Activated B cell treated with CpG ODN at 0.5 μM for 24 hours (primary cell): ENCODE measurements at regions of chr14 and their contacts with region 1.

Region 1: DNA sequence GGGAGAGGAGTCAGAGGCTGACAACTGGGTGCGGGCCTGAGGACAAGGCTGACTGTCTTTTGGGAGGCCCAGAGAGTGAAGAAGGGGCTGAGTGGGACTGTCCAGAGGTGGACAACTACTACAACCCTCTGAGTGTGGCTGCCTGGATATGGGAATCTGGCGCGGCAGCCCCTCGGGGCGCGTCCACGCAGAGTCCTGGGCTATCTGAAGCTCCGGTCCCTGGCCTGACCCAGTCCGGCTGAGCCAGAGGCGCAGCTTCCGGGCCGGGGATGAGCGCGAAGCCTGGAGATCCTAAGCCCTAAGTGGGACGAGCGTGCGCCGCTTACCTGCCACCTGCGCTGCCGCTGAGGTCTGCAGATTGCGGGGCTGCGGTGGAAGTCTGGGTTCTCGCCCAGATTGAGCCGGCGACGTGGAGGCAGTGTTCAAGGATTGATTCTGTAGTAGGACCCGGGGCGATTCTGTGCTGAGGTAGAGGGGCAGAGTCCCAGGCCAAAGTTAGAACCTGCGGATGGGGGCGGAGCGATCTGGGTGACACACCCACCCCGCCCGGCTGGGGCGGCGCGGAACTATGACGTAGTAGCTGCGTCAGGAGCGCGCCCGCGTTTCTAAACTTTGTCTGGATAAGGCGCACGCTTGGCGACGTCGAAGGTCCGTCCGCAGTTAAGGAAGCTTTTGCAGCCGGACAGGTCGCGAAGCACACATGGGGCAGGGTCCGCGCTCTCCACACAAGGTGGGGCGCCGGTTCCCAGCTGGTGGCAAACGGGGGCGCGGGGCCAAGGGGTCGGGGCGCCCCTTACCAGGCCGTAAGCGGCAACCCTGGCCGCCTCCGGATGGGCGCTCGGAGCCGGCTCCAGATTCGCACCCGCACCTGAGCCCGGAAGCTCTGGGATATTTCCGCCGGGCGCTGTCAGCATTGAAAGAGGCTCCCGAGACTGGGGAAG is at the starts of genes DHRS1 and NOP9:
- DNase-seq: peak; percentile 93
- ATAC-seq: peak; percentile 78
- H3K4me3 Mint-ChIP-seq: peak within 1 kb of the TSS; percentile 95
- H3K27ac Mint-ChIP-seq: peak within 1 kb of the TSS; percentile 94
- H3K4me1 Mint-ChIP-seq: peaks cover 51% of the 10 kb centered on the region
- H3K27me3 Mint-ChIP-seq: no peaks in the 10 kb centered on the region
- CTCF ChIP-seq: no peak
- total RNA-seq, gene DHRS1: 32.5 and 33.9 TPM in 2 replicates
- total RNA-seq, gene NOP9: 30.5 and 36.4 TPM in 2 replicates

Region 2: GRCh38 chr14:24013654-24014514 is 285.6 kb before region 1 on chr14:
- CTCF ChIA-PET with region 1: no interaction called
- POLR2A ChIA-PET with region 1: no interaction called
- intact Hi-C with region 1: loop called (anchors 1 kb)
- DNase-seq: no peak
- ATAC-seq: peak; percentile 97
- H3K4me3 Mint-ChIP-seq: no peak overlapping the region
- H3K27ac Mint-ChIP-seq: no peak overlapping the region
- H3K4me1 Mint-ChIP-seq: peaks cover 20% of the 10 kb centered on the region
- H3K27me3 Mint-ChIP-seq: no peaks in the 10 kb centered on the region
- CTCF ChIP-seq: peak; percentile 48

Region 3: DNA sequence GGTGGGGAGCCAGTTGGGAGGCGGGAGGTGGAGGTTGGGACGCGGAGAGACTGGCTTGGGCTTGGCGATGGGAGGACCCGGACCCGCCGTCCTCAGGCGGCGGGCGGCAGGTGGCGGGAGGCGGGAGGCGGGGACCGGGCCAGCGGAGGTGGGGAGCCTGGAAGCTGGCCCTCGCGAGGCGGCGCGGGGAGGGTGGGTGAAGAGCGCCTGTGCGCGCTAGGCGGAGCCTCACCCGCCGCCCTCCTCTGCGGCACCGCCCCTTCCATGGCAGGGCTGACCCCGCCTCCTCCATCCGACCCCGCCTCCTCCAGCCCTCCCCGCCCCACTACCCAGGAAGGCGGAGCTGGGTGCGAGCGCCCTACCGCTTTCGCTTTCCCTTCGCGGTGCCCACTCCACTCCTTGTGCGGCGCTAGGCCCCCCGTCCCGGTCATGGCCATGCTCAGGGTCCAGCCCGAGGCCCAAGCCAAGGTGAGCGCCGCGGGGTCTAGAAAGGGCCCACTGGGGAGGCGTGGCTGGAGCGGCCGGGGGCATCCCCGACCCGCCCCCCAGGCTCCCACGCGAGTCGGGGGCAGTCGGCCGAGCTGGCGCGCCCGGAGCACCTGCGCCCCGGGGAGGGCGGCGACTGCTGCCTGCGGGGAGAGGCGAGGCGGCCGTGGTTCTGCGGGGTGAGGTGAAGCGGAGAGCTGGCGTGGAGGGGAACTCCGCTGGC is 163.5 kb before region 1 on chr14 and contains the start of gene PSME1:
- CTCF ChIA-PET with region 1: no interaction called
- POLR2A ChIA-PET with region 1: no interaction called
- intact Hi-C with region 1: loop called (anchors 1 kb)
- DNase-seq: peak; percentile 94
- ATAC-seq: peak; percentile 97
- H3K4me3 Mint-ChIP-seq: peak within 1 kb of the TSS; percentile 91
- H3K27ac Mint-ChIP-seq: peak within 1 kb of the TSS; percentile 90
- H3K4me1 Mint-ChIP-seq: peaks cover 57% of the 10 kb centered on the region
- H3K27me3 Mint-ChIP-seq: no peaks in the 10 kb centered on the region
- CTCF ChIP-seq: no peak
- total RNA-seq, gene PSME1: 406 and 449 TPM in 2 replicates

Region 4: GRCh38 chr14:24195191-24196070 is 104.1 kb before region 1 on chr14 and contains the start of gene TM9SF1:
- CTCF ChIA-PET with region 1: no interaction called
- POLR2A ChIA-PET with region 1: interaction called, 15 read pairs
- intact Hi-C with region 1: no loop called
- DNase-seq: peak; percentile 91
- ATAC-seq: peak; percentile 83
- H3K4me3 Mint-ChIP-seq: peak within 1 kb of the TSS; percentile 96
- H3K27ac Mint-ChIP-seq: peak within 1 kb of the TSS; percentile 97
- H3K4me1 Mint-ChIP-seq: peaks cover 48% of the 10 kb centered on the region
- H3K27me3 Mint-ChIP-seq: no peaks in the 10 kb centered on the region
- CTCF ChIP-seq: no peak
- total RNA-seq, gene TM9SF1: 24.5 and 26.3 TPM in 2 replicates

Region 5: DNA sequence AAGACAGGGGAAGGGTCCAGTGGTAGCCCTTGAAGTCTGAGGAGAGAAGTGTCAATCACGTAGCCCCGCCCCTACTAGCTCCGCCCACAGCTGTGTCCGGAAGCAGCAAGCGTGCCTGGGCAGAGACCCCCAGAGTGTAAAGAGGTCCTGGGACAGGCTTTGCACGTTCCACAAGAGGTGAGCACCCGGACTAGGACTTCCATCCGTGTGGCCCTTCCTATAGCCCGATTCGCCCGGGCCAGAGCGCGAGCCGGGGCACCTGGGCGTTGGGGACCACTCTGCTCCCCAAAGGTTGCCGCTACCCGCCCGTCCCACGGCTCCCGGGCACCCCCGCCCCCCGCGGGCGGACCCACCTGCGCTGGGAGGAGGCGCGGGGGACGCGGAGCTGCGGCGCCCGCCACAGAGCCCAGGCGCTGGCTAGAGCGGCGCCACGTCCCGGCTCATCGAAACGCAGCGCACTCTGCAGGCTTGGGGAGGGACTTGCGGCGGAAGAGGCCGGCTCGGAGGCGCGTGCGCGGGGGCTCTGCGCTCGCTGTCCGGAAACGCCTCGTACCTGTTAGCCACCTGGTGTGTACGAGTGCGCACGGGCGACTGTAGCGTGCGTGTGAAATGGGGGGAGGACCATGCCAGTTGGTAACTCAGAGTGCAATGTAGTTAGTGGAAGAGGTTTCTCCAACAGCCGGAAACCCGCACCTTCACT is 28.2 kb before region 1 on chr14 and contains the start of gene RABGGTA:
- CTCF ChIA-PET with region 1: interaction called, 64 read pairs
- POLR2A ChIA-PET with region 1: interaction called, 97 read pairs
- intact Hi-C with region 1: loop called (anchors 1 kb)
- DNase-seq: peak; percentile 88
- ATAC-seq: peak; percentile 83
- H3K4me3 Mint-ChIP-seq: peak within 1 kb of the TSS; percentile 90
- H3K27ac Mint-ChIP-seq: peak within 1 kb of the TSS; percentile 96
- H3K4me1 Mint-ChIP-seq: peaks cover 57% of the 10 kb centered on the region
- H3K27me3 Mint-ChIP-seq: no peaks in the 10 kb centered on the region
- CTCF ChIP-seq: no peak
- total RNA-seq, gene RABGGTA: 53.6 and 70.5 TPM in 2 replicates

Region 6: GRCh38 chr14:24332268-24332993 is 32.9 kb after region 1 on chr14:
- CTCF ChIA-PET with region 1: interaction called, 5 read pairs
- POLR2A ChIA-PET with region 1: interaction called, 6 read pairs
- intact Hi-C with region 1: loop called (anchors 5 kb)
- DNase-seq: peak; percentile 63
- ATAC-seq: peak; percentile 95
- H3K4me3 Mint-ChIP-seq: peak overlapping the region; percentile 83
- H3K27ac Mint-ChIP-seq: peak overlapping the region; percentile 42
- H3K4me1 Mint-ChIP-seq: peaks cover 39% of the 10 kb centered on the region
- H3K27me3 Mint-ChIP-seq: peaks cover 14% of the 10 kb centered on the region
- CTCF ChIP-seq: no peak

Region 7: DNA sequence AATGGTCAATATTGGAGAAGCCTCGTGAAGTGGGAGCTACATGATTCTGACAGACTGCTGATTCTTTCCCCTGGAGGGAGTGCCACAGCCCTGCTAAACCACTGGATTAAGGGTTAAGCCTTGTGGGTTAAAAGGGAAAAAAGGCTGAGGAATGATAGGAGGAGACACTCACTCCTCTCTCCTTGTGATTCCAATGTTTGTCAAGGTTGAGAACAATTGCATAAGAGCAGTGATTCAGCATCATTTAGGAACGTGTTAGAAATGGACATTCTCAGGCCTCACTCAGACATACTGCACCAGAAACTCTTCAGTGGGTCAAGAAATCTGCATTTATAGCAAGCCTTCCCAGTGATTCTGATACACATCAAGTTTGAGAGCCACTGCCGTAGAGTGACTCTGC is 422.2 kb after region 1 on chr14:
- CTCF ChIA-PET with region 1: no interaction called
- POLR2A ChIA-PET with region 1: no interaction called
- intact Hi-C with region 1: no loop called
- DNase-seq: no peak
- ATAC-seq: no peak
- H3K4me3 Mint-ChIP-seq: no peak overlapping the region
- H3K27ac Mint-ChIP-seq: no peak overlapping the region
- H3K4me1 Mint-ChIP-seq: no peaks in the 10 kb centered on the region
- H3K27me3 Mint-ChIP-seq: peaks cover 42% of the 10 kb centered on the region
- CTCF ChIP-seq: no peak

Region 8: GRCh38 chr14:24789378-24789884 is 489.9 kb after region 1 on chr14:
- CTCF ChIA-PET with region 1: no interaction called
- POLR2A ChIA-PET with region 1: no interaction called
- intact Hi-C with region 1: no loop called
- DNase-seq: no peak
- ATAC-seq: no peak
- H3K4me3 Mint-ChIP-seq: no peak overlapping the region
- H3K27ac Mint-ChIP-seq: no peak overlapping the region
- H3K4me1 Mint-ChIP-seq: no peaks in the 10 kb centered on the region
- H3K27me3 Mint-ChIP-seq: peaks cover 18% of the 10 kb centered on the region
- CTCF ChIP-seq: no peak